ENCODE measurements at regions of chr2 and their contacts with region 1.

Region 1: DNA sequence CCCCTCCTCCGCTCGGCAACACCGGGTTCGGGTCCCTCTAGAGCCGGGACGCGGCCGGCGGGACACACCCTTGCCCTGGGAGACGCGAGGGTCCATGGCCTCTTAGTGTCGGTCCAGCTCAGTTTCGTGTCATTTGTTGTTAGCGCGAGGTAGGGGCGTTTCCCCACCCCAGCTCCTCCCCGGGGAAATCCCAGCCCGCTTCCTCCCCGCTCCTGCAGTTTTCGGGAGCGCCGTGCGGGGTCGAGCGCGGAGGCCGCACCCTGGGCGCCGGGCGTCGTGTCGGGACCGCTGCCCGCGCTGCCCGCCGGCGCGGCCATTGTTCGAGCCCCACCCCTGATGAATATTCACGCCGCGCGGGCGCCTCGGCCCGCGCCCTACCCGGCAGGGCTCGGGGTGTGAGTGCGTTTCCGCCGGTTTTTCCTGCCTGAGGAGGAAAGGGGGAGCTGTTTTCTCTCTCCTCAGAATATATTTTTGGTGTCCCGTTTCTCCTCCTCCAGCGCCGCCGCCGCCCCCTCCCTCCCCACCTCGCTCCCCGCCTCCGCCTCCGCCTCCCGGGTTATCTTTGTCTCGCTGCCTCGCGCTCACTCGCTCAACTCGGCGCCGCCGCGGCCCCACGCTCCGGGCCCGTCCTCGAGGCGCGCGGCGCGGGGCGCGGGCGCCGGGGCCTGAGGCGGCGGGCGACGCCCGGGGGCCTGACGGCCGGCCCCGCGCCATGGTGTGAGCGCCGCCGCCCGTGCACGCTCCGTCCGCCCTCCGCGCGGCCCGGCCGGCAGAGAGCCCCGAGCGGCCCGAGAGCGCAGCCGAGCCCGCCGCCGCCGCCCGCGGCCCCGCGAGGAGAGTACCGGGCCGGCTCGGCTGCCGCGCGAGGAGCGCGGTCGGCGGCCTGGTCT is at the start of gene MAP4K4:
- DNase-seq: peak; percentile 65
- H3K4me3 ChIP-seq: peak within 1 kb of the TSS; percentile 57 to 62
- H3K27ac ChIP-seq: peak within 1 kb of the TSS; percentile 75 to 78
- H3K4me1 ChIP-seq: no peaks in the 10 kb centered on the region
- H3K27me3 ChIP-seq: no peaks in the 10 kb centered on the region
- CTCF ChIP-seq: peak in 3 of 4 experiments; percentile 20 to 36 (median 36)
- POLR2A ChIP-seq: peak; percentile 33
- total RNA-seq, gene MAP4K4: 23.6 to 107 TPM

Region 2: GRCh38 chr2:101518578-101519492 is 178.5 kb before region 1 on chr2:
- intact Hi-C with region 1: loop called (anchors 10 kb)
- DNase-seq: peak; percentile 43
- H3K4me3 ChIP-seq: no peak overlapping the region
- H3K27ac ChIP-seq: no peak overlapping the region
- H3K4me1 ChIP-seq: no peaks in the 10 kb centered on the region
- H3K27me3 ChIP-seq: no peaks in the 10 kb centered on the region
- CTCF ChIP-seq: peak; percentile 22 to 38 (median 33)
- POLR2A ChIP-seq: no peak

Region 3: DNA sequence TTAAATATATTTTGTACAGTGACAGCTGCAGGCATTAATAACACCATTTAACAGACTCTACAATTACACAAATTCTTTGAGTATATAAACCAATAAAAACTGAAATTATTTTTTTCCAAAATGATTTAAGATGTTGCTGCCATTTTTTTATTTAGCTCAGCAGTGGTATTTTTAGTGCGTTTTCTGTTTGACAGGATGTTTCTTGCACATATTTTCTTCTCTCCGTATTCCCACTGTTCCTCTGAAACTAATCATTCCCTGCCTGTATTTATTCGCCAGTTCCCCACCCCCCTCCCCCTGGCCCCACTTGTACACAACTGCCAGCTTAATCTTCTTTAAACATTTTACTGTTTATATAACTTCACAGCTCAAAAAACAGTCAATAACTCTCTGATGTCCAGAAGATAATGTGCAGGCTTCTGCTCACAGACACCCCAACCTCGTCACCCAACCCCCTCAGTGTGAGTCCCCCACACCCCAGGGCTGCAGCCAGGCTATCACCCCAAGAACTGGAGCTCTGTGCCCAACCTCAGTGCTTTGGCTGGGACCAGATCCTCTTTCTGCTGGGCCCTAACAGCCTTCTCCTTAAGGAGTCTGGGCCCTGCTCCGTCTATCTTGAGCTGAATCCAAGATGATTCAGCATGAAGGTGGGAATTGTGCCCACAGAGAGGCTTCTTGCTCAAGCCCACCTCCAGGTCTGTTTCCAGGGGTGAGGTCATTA is 41.5 kb before region 1 on chr2:
- intact Hi-C with region 1: loop called (anchors 5 kb)
- DNase-seq: no peak
- H3K4me3 ChIP-seq: no peak overlapping the region
- H3K27ac ChIP-seq: no peak overlapping the region
- H3K4me1 ChIP-seq: no peaks in the 10 kb centered on the region
- H3K27me3 ChIP-seq: no peaks in the 10 kb centered on the region
- CTCF ChIP-seq: no peak
- POLR2A ChIP-seq: no peak

Region 4: GRCh38 chr2:101751875-101752619 is 54.7 kb after region 1 on chr2:
- intact Hi-C with region 1: loop called (anchors 5 kb)
- DNase-seq: no peak
- H3K4me3 ChIP-seq: no peak overlapping the region
- H3K27ac ChIP-seq: no peak overlapping the region
- H3K4me1 ChIP-seq: peaks cover 5% of the 10 kb centered on the region
- H3K27me3 ChIP-seq: no peaks in the 10 kb centered on the region
- CTCF ChIP-seq: no peak
- POLR2A ChIP-seq: no peak

Region 5: DNA sequence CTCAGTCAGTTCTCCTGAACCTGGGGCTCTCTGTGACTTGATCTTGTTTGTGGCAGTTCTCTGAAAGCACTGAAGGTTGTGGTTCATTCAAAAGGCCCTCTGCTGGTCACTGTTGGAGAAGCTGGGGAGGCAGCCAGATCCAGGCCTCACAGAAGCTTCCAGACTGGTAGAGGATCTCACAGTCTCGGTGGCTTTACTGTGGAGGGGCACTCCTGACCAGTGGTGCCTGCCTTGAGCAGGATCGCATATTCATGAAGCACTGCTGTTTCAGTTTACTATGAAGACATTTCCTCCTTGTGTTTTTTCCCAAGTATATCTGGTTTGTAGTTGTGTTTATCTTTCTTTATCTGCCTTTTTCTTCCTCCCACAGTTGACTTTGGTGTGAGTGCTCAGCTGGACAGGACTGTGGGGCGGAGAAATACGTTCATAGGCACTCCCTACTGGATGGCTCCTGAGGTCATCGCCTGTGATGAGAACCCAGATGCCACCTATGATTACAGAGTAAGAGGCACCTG is 134.0 kb after region 1 on chr2:
- intact Hi-C with region 1: loop called (anchors 2 kb)
- DNase-seq: peak; percentile 54
- H3K4me3 ChIP-seq: no peak overlapping the region
- H3K27ac ChIP-seq: peak overlapping the region; percentile 48 to 52
- H3K4me1 ChIP-seq: peaks cover 11% of the 10 kb centered on the region
- H3K27me3 ChIP-seq: no peaks in the 10 kb centered on the region
- CTCF ChIP-seq: peak; percentile 48 to 76 (median 61)
- POLR2A ChIP-seq: no peak

Region 6: DNA sequence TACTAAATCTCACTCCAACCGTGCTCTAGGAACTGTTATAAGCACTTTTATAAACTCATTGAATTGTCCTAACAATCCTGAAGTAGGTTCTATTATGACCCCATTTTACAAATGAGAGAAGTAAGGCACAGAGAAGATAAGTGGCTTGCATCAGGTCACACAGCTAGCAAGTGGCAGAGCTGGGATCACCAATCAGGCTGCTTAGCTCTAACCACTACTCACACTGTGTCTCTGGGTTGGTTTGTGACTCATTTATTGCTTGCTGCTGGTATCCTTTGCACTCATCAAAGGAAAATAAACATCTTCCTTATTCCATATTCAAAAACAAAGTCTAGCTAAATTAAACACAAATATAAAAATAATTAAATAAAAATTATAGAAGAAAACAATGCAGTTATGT is 251.9 kb after region 1 on chr2:
- intact Hi-C with region 1: no loop called
- DNase-seq: no peak
- H3K4me3 ChIP-seq: no peak overlapping the region
- H3K27ac ChIP-seq: no peak overlapping the region
- H3K4me1 ChIP-seq: no peaks in the 10 kb centered on the region
- H3K27me3 ChIP-seq: no peaks in the 10 kb centered on the region
- CTCF ChIP-seq: no peak
- POLR2A ChIP-seq: no peak